ENCODE measurements at regions of chr17 and their contacts with region 1.

Region 1: DNA sequence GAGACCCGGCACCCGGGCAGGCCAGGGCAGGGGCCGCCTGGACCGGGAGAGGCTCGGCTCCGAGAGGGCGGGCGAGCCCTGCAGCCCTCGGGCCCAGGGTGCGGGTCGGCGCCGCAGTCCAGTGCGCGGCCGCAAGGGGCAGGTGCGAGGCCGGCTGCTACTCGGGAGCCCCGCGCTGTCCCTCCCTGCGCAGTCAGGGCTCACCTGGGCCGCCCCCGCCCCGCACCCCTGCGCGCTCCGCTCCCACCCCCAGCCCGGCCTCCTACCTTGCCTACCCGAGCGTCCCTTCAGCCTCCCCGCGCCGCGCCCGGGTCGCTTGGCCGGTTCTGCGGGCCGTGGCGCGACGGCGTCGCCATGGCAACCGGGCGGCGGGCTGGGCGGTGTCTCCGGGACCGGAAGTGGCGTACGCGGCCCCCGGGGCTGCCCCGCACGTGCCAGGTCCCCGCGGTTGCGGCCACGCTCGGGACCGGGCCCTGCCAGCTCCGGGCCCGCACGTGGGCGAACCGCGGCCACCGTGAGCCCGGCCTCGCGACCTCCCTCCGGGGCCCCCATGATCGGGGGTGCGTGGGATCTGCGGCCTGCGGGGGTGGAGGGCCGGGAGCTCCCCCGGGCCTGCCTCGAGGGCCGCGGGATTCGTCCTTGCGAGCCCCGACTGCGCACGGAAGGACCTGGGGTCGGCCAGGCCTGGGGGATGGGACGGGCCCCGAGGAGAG is at the start of gene CYB561:
- DNase-seq: peak; percentile 67 to 87 (median 75)
- H3K4me3 ChIP-seq: peak within 1 kb of the TSS; percentile 49 to 75 (median 58)
- H3K4me3 Mint-ChIP-seq: peak within 1 kb of the TSS; percentile 72 to 82
- H3K27ac ChIP-seq: peak within 1 kb of the TSS; percentile 52 to 88
- H3K27ac Mint-ChIP-seq: peak within 1 kb of the TSS; percentile 5 to 78 (median 66)
- H3K4me1 ChIP-seq: peaks cover 22 to 38% of the 10 kb centered on the region in 2 donors
- H3K4me1 Mint-ChIP-seq: peaks cover 30% of the 10 kb centered on the region
- H3K27me3 ChIP-seq: no peaks in the 10 kb centered on the region
- H3K27me3 Mint-ChIP-seq: peaks cover 12 to 30% (median 23%) of the 10 kb centered on the region in 3 donors
- CTCF ChIP-seq: peak; percentile 79
- polyA plus RNA-seq, gene CYB561: 5.2 to 11.8 (median 8.3) TPM

Region 2: DNA sequence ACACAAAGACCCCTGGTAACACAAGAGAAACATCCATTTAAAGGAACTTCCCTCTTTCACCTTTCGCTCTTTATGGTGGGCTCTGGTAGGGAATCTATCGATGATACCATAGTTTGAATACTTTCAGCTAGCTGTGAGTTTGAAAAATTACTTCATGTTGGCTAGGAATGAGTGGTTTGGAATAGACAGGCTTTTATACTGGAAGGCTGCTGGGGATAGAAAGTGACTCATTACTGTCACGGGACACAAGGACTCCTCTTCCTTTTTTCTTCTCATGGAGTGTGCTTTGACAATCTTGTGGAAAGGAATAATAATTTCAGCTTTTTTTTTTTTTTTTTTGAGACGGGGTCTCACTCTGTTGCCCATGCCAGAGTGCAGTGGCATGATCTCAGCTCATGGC is 76.9 kb before region 1 on chr17:
- intact Hi-C with region 1: no loop called
- DNase-seq: peak in 1 of 3 donors; percentile 35
- H3K4me3 ChIP-seq: no peak overlapping the region
- H3K4me3 Mint-ChIP-seq: no peak overlapping the region
- H3K27ac ChIP-seq: no peak overlapping the region
- H3K27ac Mint-ChIP-seq: no peak overlapping the region
- H3K4me1 ChIP-seq: no peaks in the 10 kb centered on the region
- H3K4me1 Mint-ChIP-seq: no peaks in the 10 kb centered on the region
- H3K27me3 ChIP-seq: no peaks in the 10 kb centered on the region
- H3K27me3 Mint-ChIP-seq: peaks cover 0 to 2% (median 0%) of the 10 kb centered on the region in 3 donors
- CTCF ChIP-seq: no peak

Region 3: GRCh38 chr17:63549946-63550807 is 104.0 kb after region 1 on chr17 and contains the start of gene DCAF7:
- intact Hi-C with region 1: loop called (anchors 10 kb)
- DNase-seq: peak; percentile 99 to 100 (median 100)
- H3K4me3 ChIP-seq: peak within 1 kb of the TSS; percentile 74 to 99 (median 81)
- H3K4me3 Mint-ChIP-seq: peak within 1 kb of the TSS; percentile 96 to 97
- H3K27ac ChIP-seq: peak within 1 kb of the TSS; percentile 88 to 96
- H3K27ac Mint-ChIP-seq: peak within 1 kb of the TSS; percentile 96 to 98 (median 97)
- H3K4me1 ChIP-seq: peaks cover 35 to 48% of the 10 kb centered on the region in 2 donors
- H3K4me1 Mint-ChIP-seq: peaks cover 48% of the 10 kb centered on the region
- H3K27me3 ChIP-seq: no peaks in the 10 kb centered on the region
- H3K27me3 Mint-ChIP-seq: peaks cover 0 to 3% (median 3%) of the 10 kb centered on the region in 3 donors
- CTCF ChIP-seq: no peak
- polyA plus RNA-seq, gene DCAF7: 41.9 to 89.4 (median 58.1) TPM

Measured in CD14-positive monocyte (primary cell).